WTC11 (cell line): ENCODE measurements at regions of chr4 and their contacts with region 1.

Region 1: DNA sequence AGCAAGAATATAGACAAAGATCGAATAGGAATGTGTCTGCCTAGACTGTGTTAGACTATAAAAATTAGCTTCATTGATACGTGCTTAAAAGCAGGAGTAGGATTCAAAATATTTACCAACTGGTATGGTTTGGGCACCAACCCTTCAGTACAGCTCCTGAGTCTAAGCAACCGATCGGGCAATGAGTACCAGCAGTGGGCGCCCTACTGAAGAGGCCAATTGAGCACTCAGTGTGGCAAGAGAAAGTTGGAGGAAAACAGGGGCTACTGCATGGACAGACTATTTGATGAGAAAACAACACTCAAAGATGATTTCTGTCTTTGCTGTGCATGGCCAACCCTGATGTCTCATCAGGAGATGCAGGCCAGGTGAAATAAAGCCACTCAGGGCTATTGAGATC is 176.0 kb upstream of the NWD2 start:
- DNase-seq: peak; percentile 68
- ATAC-seq: peak; percentile 97
- H3K4me3 Mint-ChIP-seq: no peak overlapping the region
- H3K27ac Mint-ChIP-seq: no peak overlapping the region
- H3K4me1 Mint-ChIP-seq: no peaks in the 10 kb centered on the region
- H3K27me3 Mint-ChIP-seq: no peaks in the 10 kb centered on the region
- CTCF ChIP-seq: 0 out of 2 replicates have a peak, but pooled peaks have one; percentile 22

Region 2: DNA sequence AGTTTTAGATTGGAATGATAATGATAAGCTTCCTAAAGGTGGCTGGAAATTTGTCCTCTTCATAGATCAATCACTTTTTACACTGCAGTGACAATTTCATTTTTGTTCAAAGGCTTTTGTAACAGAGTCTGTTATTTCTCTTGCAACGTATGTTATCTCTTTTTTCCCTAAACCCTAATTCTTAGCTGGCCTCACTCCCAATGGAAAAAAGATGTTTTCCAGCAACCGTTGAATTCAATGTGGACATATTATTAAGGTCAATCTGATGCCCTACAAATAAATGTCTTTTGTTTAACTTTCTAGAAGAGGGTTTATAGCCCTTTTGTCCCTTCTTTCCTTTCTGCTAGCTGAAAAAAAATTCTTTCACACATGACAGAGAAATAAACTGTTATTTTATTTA is 16.7 kb before region 1 on chr4:
- CTCF ChIA-PET with region 1: interaction called, 21 read pairs
- POLR2A ChIA-PET with region 1: no interaction called
- DNase-seq: no peak
- ATAC-seq: no peak
- H3K4me3 Mint-ChIP-seq: no peak overlapping the region
- H3K27ac Mint-ChIP-seq: no peak overlapping the region
- H3K4me1 Mint-ChIP-seq: peaks cover 15% of the 10 kb centered on the region
- H3K27me3 Mint-ChIP-seq: no peaks in the 10 kb centered on the region
- CTCF ChIP-seq: no peak

Region 3: GRCh38 chr4:37109756-37110155 is 41.2 kb after region 1 on chr4:
- CTCF ChIA-PET with region 1: no interaction called
- POLR2A ChIA-PET with region 1: no interaction called
- DNase-seq: no peak
- ATAC-seq: no peak
- H3K4me3 Mint-ChIP-seq: no peak overlapping the region
- H3K27ac Mint-ChIP-seq: no peak overlapping the region
- H3K4me1 Mint-ChIP-seq: no peaks in the 10 kb centered on the region
- H3K27me3 Mint-ChIP-seq: no peaks in the 10 kb centered on the region
- CTCF ChIP-seq: no peak

Region 4: GRCh38 chr4:37138019-37138653 is 69.6 kb after region 1 on chr4:
- CTCF ChIA-PET with region 1: no interaction called
- POLR2A ChIA-PET with region 1: no interaction called
- DNase-seq: no peak
- ATAC-seq: no peak
- H3K4me3 Mint-ChIP-seq: no peak overlapping the region
- H3K27ac Mint-ChIP-seq: no peak overlapping the region
- H3K4me1 Mint-ChIP-seq: no peaks in the 10 kb centered on the region
- H3K27me3 Mint-ChIP-seq: no peaks in the 10 kb centered on the region
- CTCF ChIP-seq: no peak

Region 5: GRCh38 chr4:37165844-37166243 is 97.3 kb after region 1 on chr4:
- CTCF ChIA-PET with region 1: no interaction called
- POLR2A ChIA-PET with region 1: no interaction called
- DNase-seq: no peak
- ATAC-seq: no peak
- H3K4me3 Mint-ChIP-seq: no peak overlapping the region
- H3K27ac Mint-ChIP-seq: no peak overlapping the region
- H3K4me1 Mint-ChIP-seq: no peaks in the 10 kb centered on the region
- H3K27me3 Mint-ChIP-seq: no peaks in the 10 kb centered on the region
- CTCF ChIP-seq: no peak

Region 6: DNA sequence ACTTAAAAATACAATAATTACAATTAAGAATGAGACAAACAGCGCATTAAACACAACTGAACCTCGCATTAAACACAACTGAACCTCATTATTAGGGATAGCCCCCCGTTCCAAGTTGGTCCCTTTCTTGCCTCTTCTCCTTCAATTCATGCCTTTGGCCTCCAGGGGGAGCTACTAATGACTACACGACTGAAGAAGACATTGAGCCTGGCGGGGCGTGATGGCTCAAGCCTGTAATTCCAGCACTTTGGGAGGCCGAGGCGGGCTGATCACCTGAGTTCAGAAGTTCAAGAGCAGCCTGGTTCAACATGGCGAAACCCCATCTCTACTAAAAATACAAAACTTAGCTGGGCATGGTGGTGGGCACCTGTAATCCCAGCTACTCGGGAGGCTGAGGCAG is 119.5 kb after region 1 on chr4:
- CTCF ChIA-PET with region 1: interaction called, 12 read pairs
- POLR2A ChIA-PET with region 1: no interaction called
- DNase-seq: peak; percentile 63
- ATAC-seq: peak; percentile 79; the same call in 1 of the 2 replicates
- H3K4me3 Mint-ChIP-seq: no peak overlapping the region
- H3K27ac Mint-ChIP-seq: no peak overlapping the region
- H3K4me1 Mint-ChIP-seq: no peaks in the 10 kb centered on the region
- H3K27me3 Mint-ChIP-seq: no peaks in the 10 kb centered on the region; the same call in 1 of the 2 replicates
- CTCF ChIP-seq: peak; percentile 77

Region 7: GRCh38 chr4:37389967-37390580 is 321.5 kb after region 1 on chr4:
- CTCF ChIA-PET with region 1: interaction called, 20 read pairs
- POLR2A ChIA-PET with region 1: no interaction called
- DNase-seq: peak; percentile 16
- ATAC-seq: peak; percentile 39
- H3K4me3 Mint-ChIP-seq: no peak overlapping the region
- H3K27ac Mint-ChIP-seq: no peak overlapping the region
- H3K4me1 Mint-ChIP-seq: peaks cover 28% of the 10 kb centered on the region
- H3K27me3 Mint-ChIP-seq: no peaks in the 10 kb centered on the region
- CTCF ChIP-seq: peak; percentile 12; the same call in 1 of the 2 replicates